T-cell (primary cell): ENCODE measurements at regions of chr6 and their contacts with region 1.

Region 1: GRCh38 chr6:36703982-36704381 is 6.4 kb downstream of the RAB44 start:
- DNase-seq: no peak
- ATAC-seq: no peak
- H3K4me3 ChIP-seq: no peak overlapping the region
- H3K4me3 Mint-ChIP-seq: no peak overlapping the region
- H3K27ac ChIP-seq: no peak overlapping the region
- H3K27ac Mint-ChIP-seq: no peak overlapping the region
- H3K4me1 ChIP-seq: no peaks in the 10 kb centered on the region
- H3K4me1 Mint-ChIP-seq: peaks cover 0 to 3% (median 0%) of the 10 kb centered on the region in 3 donors
- H3K27me3 ChIP-seq: peaks cover 0 to 10% of the 10 kb centered on the region in 2 experiments
- H3K27me3 Mint-ChIP-seq: peaks cover 0 to 3% of the 10 kb centered on the region in 2 donors

Region 2: GRCh38 chr6:36827261-36828079 is 123.5 kb after region 1 on chr6:
- CTCF ChIA-PET with region 1: no interaction called
- POLR2A ChIA-PET with region 1: no interaction called
- DNase-seq: peak in 2 of 35 experiments; percentile 12 to 25
- ATAC-seq: peak; percentile 34 to 76 (median 49)
- H3K4me3 ChIP-seq: no peak overlapping the region
- H3K4me3 Mint-ChIP-seq: no peak overlapping the region
- H3K27ac ChIP-seq: no peak overlapping the region
- H3K27ac Mint-ChIP-seq: no peak overlapping the region
- H3K4me1 ChIP-seq: no peaks in the 10 kb centered on the region
- H3K4me1 Mint-ChIP-seq: peaks cover 3 to 8% (median 7%) of the 10 kb centered on the region in 3 donors
- H3K27me3 ChIP-seq: peaks cover 0 to 21% of the 10 kb centered on the region in 2 experiments
- H3K27me3 Mint-ChIP-seq: peaks cover 5 to 11% of the 10 kb centered on the region in 2 donors

Region 3: DNA sequence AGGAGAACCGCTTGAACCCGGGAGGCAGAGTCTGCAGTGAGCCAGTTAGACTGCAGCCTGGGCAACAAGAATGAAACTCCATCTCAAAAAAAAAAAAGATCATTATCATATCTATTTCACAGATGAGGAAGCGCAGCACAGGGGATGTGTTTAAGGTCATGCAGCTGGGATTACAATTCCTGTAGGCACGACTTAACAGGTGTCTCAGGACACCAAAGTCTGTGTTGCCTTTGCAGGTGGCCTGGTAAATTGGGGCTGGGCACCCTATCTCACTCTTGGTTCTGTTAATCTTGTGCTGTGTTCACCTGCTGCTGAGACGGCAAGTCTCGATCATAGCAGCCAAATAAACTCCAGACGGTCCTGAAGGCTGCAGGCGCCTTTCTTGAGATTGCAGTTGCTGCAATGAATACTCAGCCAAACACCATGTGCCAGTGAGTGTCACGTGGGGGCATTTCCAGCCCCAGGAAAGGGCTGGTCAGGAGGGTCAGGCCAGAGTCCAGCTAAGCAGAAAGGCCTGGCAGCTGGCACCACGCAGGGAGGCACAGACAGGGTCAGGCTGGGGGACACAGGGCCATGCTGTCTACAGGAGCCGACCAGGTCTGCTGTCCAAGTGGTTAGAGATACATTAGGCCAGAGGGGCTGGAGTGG is 357.3 kb after region 1 on chr6:
- CTCF ChIA-PET with region 1: no interaction called
- POLR2A ChIA-PET with region 1: interaction called in 1 of 2 experiments, 10 read pairs
- DNase-seq: no peak
- ATAC-seq: no peak
- H3K4me3 ChIP-seq: no peak overlapping the region
- H3K4me3 Mint-ChIP-seq: no peak overlapping the region
- H3K27ac ChIP-seq: no peak overlapping the region
- H3K27ac Mint-ChIP-seq: no peak overlapping the region
- H3K4me1 ChIP-seq: no peaks in the 10 kb centered on the region
- H3K4me1 Mint-ChIP-seq: peaks cover 0 to 5% (median 0%) of the 10 kb centered on the region in 3 donors
- H3K27me3 ChIP-seq: no peaks in the 10 kb centered on the region
- H3K27me3 Mint-ChIP-seq: no peaks in the 10 kb centered on the region